ENCODE measurements at regions of chr5 and their contacts with region 1.

Region 1: DNA sequence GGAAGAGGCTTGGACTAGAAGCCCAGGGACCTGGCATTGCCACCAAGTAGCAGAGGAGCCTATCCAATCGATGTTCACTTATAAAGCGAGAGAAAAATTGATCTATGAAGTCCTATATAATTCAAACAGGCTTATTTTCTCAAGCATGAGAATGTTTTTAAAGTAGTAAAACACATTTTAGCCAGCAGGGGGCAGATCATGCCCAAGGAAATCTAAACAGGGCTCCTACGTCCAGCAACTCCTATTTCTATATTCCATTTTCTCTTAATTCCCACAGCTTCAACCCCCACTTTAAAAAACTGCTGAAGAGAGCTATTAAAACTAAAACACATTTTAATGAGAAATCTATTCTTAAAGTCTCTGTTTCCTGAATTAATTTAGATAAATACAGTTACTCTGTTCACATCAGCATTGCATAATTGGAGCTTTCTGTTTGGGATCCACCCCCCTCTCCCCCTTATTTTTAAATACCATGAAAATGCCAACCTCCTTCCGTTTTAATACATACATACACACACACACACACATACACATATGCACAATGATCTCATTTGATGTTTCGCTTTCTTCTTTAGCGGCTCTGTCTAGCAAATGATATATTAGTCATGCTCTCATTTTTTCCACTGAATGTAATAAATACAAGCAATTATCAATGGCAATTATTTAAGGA is 144.9 kb downstream of the MYO10 start:
- DNase-seq: peak in 1 of 2 donors; percentile 20
- ATAC-seq: peak; percentile 69

Region 2: GRCh38 chr5:16934123-16934522 is 143.0 kb after region 1 on chr5:
- intact Hi-C with region 1: loop called in 1 of 2 experiments (anchors 10 kb)
- DNase-seq: peak; percentile 72 to 78
- ATAC-seq: peak; percentile 27

Region 3: DNA sequence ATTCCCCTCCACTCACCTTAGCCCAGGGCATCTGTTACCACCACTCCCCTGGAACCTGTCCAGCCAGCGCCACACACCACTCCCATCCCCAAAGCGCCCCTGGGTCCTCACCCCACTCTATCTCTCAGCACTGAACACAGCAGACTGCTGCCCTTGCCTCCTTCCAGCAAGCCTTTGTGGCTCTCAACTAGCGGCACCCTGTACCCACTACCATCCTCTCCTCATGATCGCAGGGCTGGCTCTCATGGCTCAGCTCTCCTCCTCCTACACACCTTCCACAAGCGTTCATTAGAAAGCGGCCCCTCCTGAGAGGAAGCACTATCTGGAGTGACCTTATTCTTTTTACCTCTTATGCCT is 412.9 kb after region 1 on chr5:
- intact Hi-C with region 1: loop called in 1 of 2 experiments (anchors 5 kb)
- DNase-seq: no peak
- ATAC-seq: no peak